ENCODE measurements at regions of chr18 and their contacts with region 1.

Region 1: DNA sequence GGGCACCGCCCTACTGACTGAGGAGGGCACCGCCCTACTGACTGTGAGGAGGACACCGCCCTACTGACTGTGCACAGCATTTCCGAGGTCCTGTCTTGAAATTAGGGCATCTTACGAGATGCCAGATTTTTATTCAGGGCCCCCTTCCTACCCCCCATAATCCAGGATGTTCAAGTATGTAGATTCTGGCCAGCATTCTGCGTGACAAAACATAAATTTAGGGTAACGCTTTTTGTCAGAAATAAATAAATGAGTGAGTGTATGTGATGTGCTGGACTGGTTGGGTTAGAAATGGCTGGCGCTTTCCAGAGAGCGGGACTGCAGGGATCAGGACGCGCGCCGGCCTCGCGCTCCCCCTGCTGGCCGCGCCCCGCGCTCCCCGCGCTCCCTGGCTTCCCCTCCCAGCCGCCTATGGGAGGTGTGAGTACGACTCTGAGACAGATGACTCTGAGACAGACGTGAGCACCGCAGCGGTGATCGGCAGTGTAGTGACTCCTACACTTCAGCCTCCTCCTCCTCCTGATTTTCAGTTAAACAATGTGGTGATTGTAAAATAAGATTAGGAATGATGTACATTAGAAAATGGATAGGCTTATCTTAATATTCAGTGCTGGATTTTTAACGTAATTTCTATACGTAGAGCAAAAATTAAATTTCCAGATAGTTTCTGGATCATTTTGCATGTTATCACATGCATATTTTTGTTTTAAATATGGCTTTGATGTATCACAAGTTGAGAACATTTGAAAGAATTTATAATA is 149.2 kb upstream of the NFATC1 start:
- DNase-seq: peak; percentile 30
- ATAC-seq: peak; percentile 100
- H3K4me3 ChIP-seq: no peak overlapping the region
- H3K27ac ChIP-seq: no peak overlapping the region
- H3K4me1 ChIP-seq: 0 out of 2 replicates have a peak, but pooled peaks cover 4% of the 10 kb centered on the region
- H3K27me3 ChIP-seq: no peaks in the 10 kb centered on the region
- CTCF ChIP-seq: peak; percentile 93 to 97 (median 95)
- EP300 ChIP-seq: no peak
- POLR2A ChIP-seq: no peak
- RAD21 ChIP-seq: peak; percentile 67

Region 2: GRCh38 chr18:77899972-77900754 is 1346.4 kb before region 1 on chr18:
- CTCF ChIA-PET with region 1: no interaction called
- POLR2A ChIA-PET with region 1: no interaction called
- RAD21 ChIA-PET with region 1: no interaction called
- SMC1A ChIA-PET with region 1: no interaction called
- in situ Hi-C with region 1: loop called (anchors 25 kb)
- intact Hi-C with region 1: loop called (anchors 5 kb)
- DNase-seq: no peak
- ATAC-seq: peak; percentile 91
- H3K4me3 ChIP-seq: no peak overlapping the region
- H3K27ac ChIP-seq: no peak overlapping the region
- H3K4me1 ChIP-seq: no peaks in the 10 kb centered on the region
- H3K27me3 ChIP-seq: no peaks in the 10 kb centered on the region
- CTCF ChIP-seq: peak; percentile 77 to 91 (median 84); a peak in 5 of 6 replicates
- EP300 ChIP-seq: no peak
- POLR2A ChIP-seq: no peak
- RAD21 ChIP-seq: peak; percentile 50

Region 3: DNA sequence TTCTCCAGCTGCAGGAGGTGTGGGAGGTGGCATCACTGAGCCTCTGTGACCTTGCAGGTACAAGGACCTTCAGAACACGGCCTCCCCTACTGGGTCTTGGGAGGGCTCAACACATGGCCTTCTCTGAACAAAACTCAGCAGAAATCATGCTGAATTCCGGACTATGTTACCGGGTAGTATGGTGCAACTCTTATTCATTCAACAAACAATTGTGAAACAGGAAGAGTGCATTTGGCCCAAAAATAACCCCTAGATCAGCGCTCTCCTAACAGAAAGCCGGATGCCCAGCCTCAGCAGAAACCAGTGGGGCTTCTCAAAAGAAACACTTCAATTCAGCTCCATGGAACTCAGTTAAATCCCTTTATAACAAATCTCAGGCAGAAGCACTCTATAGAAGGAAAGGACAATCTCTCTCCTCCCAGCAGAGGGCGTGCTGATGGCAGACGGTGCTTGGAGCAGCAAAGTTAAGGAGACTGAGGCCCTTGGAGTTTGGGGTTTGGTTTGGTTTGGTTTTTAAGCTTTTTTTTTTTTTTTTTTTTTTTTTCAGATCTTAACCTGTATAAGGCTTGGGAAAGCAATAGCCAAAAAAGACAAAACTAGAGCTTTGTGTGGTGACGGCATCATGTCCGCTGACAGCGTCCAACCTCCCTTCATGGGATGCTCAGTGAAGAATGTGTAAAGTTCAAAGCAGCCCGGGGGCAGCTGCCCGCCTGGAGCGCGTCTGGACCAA is 371.1 kb before region 1 on chr18:
- CTCF ChIA-PET with region 1: interaction called, 7 read pairs
- POLR2A ChIA-PET with region 1: no interaction called
- RAD21 ChIA-PET with region 1: no interaction called
- SMC1A ChIA-PET with region 1: interaction called, 5 read pairs
- in situ Hi-C with region 1: loop called (anchors 10 kb)
- intact Hi-C with region 1: loop called (anchors 1 kb)
- DNase-seq: no peak
- ATAC-seq: 0 out of 3 replicates have a peak, but pooled peaks have one; percentile 39
- H3K4me3 ChIP-seq: no peak overlapping the region
- H3K27ac ChIP-seq: no peak overlapping the region
- H3K4me1 ChIP-seq: no peaks in the 10 kb centered on the region
- H3K27me3 ChIP-seq: no peaks in the 10 kb centered on the region
- CTCF ChIP-seq: peak; percentile 41 to 58 (median 54); a peak in 5 of 6 replicates
- EP300 ChIP-seq: no peak
- POLR2A ChIP-seq: no peak
- RAD21 ChIP-seq: peak; percentile 48

Region 4: DNA sequence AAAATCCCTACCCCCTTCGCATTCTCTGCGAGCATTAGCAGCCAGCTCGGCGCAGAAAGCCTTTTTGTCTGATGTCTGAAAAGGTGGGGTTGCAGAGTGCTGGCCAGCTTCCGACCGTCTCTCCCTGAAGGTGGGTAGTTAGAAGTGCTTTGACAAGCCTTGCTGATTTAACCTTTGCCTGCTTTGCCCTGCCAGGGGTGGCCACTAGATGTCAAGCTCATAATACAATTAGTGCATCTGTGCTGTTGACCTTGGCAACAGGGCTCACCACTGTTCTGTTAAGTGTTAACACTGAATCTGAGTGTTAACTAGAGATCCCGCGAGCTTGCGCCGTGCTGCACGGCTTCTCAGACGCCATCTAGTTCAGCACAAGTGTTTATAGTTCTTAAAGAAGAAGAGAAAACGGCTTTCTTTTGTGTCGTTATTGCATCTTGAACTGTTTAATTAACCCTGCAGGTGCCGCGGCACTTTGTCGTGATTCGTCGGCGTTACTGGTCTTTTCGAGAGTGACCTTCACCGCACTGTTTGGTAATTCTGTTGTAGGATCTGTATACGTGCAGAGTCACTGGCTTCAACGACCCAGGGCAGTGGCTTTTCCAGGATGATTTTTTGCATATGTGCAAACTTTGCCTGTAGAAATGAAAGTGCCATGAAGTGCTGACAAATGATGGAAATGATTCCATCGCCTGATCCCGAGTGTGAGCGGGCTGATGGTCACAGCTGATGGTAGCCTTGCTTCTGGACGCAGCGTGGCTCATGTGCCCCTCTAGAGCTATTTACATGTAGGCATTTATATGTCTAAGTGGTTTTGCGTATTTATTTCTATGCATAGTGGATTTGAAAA is 261.4 kb before region 1 on chr18:
- CTCF ChIA-PET with region 1: interaction called, 3 read pairs
- POLR2A ChIA-PET with region 1: no interaction called
- RAD21 ChIA-PET with region 1: no interaction called
- SMC1A ChIA-PET with region 1: interaction called, 6 read pairs
- in situ Hi-C with region 1: loop called (anchors 10 kb)
- intact Hi-C with region 1: loop called (anchors 2 kb)
- DNase-seq: no peak
- ATAC-seq: peak; percentile 59
- H3K4me3 ChIP-seq: no peak overlapping the region
- H3K27ac ChIP-seq: no peak overlapping the region
- H3K4me1 ChIP-seq: no peaks in the 10 kb centered on the region
- H3K27me3 ChIP-seq: no peaks in the 10 kb centered on the region
- CTCF ChIP-seq: peak; percentile 38 to 52 (median 44); a peak in 4 of 6 replicates
- EP300 ChIP-seq: no peak
- POLR2A ChIP-seq: no peak
- RAD21 ChIP-seq: peak; percentile 66

Region 5: GRCh38 chr18:79068937-79069791 is 177.4 kb before region 1 on chr18 and contains the start of gene ATP9B:
- CTCF ChIA-PET with region 1: no interaction called
- POLR2A ChIA-PET with region 1: no interaction called
- RAD21 ChIA-PET with region 1: no interaction called
- SMC1A ChIA-PET with region 1: interaction called, 5 read pairs
- in situ Hi-C with region 1: no loop called
- intact Hi-C with region 1: loop called (anchors 10 kb)
- DNase-seq: peak; percentile 88
- ATAC-seq: peak; percentile 95
- H3K4me3 ChIP-seq: peak within 1 kb of the TSS; percentile 80
- H3K27ac ChIP-seq: peak within 1 kb of the TSS; percentile 84
- H3K4me1 ChIP-seq: no peaks in the 10 kb centered on the region; the same call in 1 of the 2 replicates
- H3K27me3 ChIP-seq: no peaks in the 10 kb centered on the region
- CTCF ChIP-seq: no peak
- EP300 ChIP-seq: peak in 1 of 2 experiments; percentile 67; a peak in 1 of 4 replicates
- POLR2A ChIP-seq: peak; percentile 90
- RAD21 ChIP-seq: no peak
- polyA plus RNA-seq, gene ATP9B: 0.74 to 1.1 TPM